ENCODE measurements at regions of chr20 and their contacts with region 1.

Region 1: DNA sequence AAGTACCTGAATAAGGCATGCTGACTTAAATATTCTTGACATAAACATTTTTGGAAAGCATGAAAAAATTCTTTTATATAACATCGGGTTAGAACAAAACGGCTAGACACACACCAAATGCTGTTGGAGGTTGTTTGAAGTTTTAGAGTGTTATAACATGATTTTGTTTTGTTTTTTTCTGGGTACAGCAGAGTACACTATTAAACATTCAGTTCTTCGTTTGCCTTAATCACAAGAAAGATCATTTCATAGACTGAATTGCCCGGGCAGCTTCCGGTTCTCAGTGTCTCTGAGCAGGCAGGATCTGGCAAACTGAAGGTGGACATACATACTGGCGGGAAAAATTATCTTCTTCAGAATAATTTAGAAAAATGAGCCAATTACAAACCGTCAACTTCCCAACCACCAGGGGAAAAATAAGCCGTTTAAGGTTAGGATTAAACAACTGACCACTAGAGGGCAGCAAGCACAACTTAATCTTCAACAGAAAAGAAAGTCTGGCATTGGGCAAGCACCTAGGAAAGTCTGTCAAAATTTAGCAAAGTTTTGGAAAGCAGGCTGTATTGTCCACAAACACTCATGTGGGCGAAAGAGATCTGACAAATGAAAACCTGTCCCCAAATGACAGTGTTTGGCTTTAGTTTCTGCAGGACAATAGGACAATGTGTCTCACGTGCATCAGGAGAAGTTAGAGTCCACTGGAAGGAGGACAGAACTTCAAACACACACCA is 15.0 kb downstream of the ZNF217 start:
- DNase-seq: no peak
- ATAC-seq: peak; percentile 58
- H3K4me3 Mint-ChIP-seq: peak overlapping the region; percentile 32
- H3K27ac Mint-ChIP-seq: peak overlapping the region; percentile 88
- H3K4me1 Mint-ChIP-seq: peaks cover 56% of the 10 kb centered on the region
- H3K27me3 Mint-ChIP-seq: no peaks in the 10 kb centered on the region
- CTCF ChIP-seq: no peak

Region 2: GRCh38 chr20:53413186-53413631 is 165.4 kb before region 1 on chr20:
- CTCF ChIA-PET with region 1: no interaction called
- POLR2A ChIA-PET with region 1: no interaction called
- intact Hi-C with region 1: loop called (anchors 10 kb)
- DNase-seq: peak; percentile 43
- ATAC-seq: peak; percentile 70
- H3K4me3 Mint-ChIP-seq: peak overlapping the region; percentile 58
- H3K27ac Mint-ChIP-seq: no peak overlapping the region
- H3K4me1 Mint-ChIP-seq: peaks cover 6% of the 10 kb centered on the region
- H3K27me3 Mint-ChIP-seq: peaks cover 2% of the 10 kb centered on the region
- CTCF ChIP-seq: no peak

Region 3: GRCh38 chr20:53643031-53643832 is 64.6 kb after region 1 on chr20:
- CTCF ChIA-PET with region 1: no interaction called
- POLR2A ChIA-PET with region 1: no interaction called
- intact Hi-C with region 1: loop called (anchors 2 kb)
- DNase-seq: no peak
- ATAC-seq: peak; percentile 94
- H3K4me3 Mint-ChIP-seq: peak overlapping the region; percentile 78
- H3K27ac Mint-ChIP-seq: peak overlapping the region; percentile 94
- H3K4me1 Mint-ChIP-seq: peaks cover 36% of the 10 kb centered on the region
- H3K27me3 Mint-ChIP-seq: no peaks in the 10 kb centered on the region
- CTCF ChIP-seq: no peak